ENCODE measurements at regions of chr14 and their contacts with region 1.

Region 1: GRCh38 chr14:75293920-75294642 is 15.5 kb downstream of the FOS start:
- DNase-seq: peak; percentile 98 to 100
- H3K4me3 ChIP-seq: peak overlapping the region; percentile 65
- H3K27ac ChIP-seq: peak overlapping the region; percentile 79
- H3K4me1 ChIP-seq: peaks cover 40% of the 10 kb centered on the region
- H3K27me3 ChIP-seq: no peaks in the 10 kb centered on the region
- CTCF ChIP-seq: no peak

Region 2: DNA sequence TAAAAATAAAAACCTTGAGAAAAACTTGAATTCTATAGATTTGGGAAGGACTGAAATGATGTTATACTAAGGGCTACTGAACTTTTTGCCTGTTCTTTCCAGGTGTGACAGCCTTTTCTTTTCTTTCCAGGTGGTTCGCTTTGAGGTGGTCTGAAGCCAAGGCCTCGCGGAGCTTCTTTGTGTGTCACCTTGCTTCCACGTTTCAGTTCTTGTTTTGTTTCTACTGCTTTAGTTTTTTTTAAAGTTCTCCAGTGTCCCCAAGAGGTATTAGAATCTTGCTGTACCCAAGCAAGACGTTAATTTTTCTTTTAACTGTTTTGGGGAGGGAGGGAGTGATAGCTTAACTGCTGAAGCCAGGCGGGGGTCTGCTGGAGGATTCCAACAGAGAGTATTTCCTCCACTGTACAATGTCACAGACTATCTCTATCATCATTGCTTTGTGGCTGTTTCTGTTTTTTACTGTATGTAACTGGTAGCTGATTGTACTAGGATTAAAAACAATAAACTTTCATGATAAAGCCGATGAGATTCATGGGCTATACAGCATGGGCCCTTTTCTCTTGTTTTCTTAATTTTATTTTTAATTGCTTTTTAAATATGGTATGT is 458.3 kb before region 1 on chr14:
- CTCF ChIA-PET with region 1: no interaction called
- POLR2A ChIA-PET with region 1: interaction called, 13 read pairs
- intact Hi-C with region 1: no loop called
- DNase-seq: no peak
- H3K4me3 ChIP-seq: no peak overlapping the region
- H3K27ac ChIP-seq: no peak overlapping the region
- H3K4me1 ChIP-seq: no peaks in the 10 kb centered on the region
- H3K27me3 ChIP-seq: no peaks in the 10 kb centered on the region
- CTCF ChIP-seq: no peak

Region 3: GRCh38 chr14:75132382-75133086 is 161.5 kb before region 1 on chr14:
- CTCF ChIA-PET with region 1: interaction called, 10 read pairs
- POLR2A ChIA-PET with region 1: interaction called, 5 read pairs
- intact Hi-C with region 1: loop called (anchors 1 kb)
- DNase-seq: peak; percentile 79 to 87
- H3K4me3 ChIP-seq: no peak overlapping the region
- H3K27ac ChIP-seq: peak overlapping the region; percentile 33
- H3K4me1 ChIP-seq: peaks cover 29% of the 10 kb centered on the region
- H3K27me3 ChIP-seq: no peaks in the 10 kb centered on the region
- CTCF ChIP-seq: peak; percentile 96

Region 4: DNA sequence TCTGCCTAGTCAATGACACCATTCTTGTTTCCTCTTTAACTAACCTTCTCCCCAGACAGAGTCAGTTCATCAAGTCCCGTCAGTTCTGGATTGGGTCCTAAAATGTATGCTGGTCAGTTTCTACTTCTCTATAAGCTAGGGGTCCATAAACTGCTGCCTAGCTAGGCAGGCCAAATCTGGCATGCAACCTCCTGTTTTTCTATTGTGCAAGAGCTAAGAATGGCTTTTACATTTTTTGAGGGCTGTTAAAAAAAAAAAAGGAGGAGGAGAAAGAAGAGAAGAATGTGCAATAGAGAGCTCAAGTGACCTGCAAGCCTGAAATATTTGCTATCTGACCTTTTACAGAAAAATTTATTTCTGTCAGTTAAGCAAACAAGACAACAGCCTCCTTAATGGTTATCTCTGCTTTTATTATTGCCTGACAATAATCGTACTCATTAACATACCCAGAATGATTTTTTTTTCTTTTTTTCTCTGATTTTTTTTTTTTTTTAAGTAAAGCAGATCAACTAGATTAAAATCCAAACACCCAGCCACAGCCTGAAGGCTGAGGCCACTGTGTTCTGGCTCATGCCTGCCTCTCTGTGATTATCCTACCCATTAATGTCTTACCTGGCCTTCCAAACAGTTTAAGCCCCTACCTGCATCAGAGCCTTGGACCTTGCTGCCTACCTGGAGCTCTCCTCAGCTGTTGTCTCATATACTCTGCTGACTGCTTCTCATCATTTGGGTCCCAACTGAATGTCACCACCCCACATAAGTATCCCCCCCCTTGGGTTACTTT is 111.0 kb before region 1 on chr14:
- CTCF ChIA-PET with region 1: interaction called, 3 read pairs
- POLR2A ChIA-PET with region 1: interaction called, 11 read pairs
- intact Hi-C with region 1: no loop called
- DNase-seq: peak; percentile 53 to 94
- H3K4me3 ChIP-seq: no peak overlapping the region
- H3K27ac ChIP-seq: peak overlapping the region; percentile 63
- H3K4me1 ChIP-seq: peaks cover 39% of the 10 kb centered on the region
- H3K27me3 ChIP-seq: no peaks in the 10 kb centered on the region
- CTCF ChIP-seq: no peak; the same call in 1 of the 2 replicates

Region 5: DNA sequence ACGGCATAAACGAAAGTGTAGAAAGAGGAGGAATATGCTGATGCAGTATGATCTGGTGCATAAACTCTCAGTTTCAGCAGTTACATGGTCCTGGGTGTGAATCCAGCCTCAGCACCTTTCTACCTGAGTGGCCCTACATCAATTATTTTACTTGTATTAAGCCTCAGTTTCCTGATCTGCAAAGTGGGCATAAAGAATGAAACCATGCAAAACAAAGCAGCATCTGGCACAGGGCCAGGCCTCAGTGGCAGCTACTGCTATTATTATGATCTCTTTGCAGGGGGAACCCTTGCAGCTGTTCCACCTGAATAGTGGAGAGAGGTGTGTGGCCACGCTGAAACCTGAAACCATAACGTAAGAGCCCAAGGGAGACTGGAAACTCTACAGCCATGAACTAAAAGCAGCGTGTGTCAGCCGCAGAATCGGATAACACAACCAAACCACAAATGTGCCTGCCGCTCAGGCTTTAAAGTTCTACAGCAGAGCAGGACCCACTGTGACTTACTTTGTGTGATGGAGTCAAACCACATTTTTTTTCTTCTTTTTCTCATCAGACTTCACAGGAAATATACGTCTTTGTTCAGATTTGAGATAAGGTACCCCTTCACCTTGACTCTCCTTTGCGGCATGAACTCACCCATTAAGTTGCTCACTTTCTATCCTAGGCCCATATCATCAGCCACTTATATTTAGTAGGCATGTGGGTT is 44.7 kb before region 1 on chr14:
- CTCF ChIA-PET with region 1: interaction called, 5 read pairs
- POLR2A ChIA-PET with region 1: interaction called, 19 read pairs
- intact Hi-C with region 1: no loop called
- DNase-seq: peak; percentile 48 to 72
- H3K4me3 ChIP-seq: no peak overlapping the region; the same call in 1 of the 2 replicates
- H3K27ac ChIP-seq: peak overlapping the region; percentile 51
- H3K4me1 ChIP-seq: peaks cover 60% of the 10 kb centered on the region
- H3K27me3 ChIP-seq: no peaks in the 10 kb centered on the region
- CTCF ChIP-seq: no peak

Region 6: GRCh38 chr14:75278422-75279161 is 15.5 kb before region 1 on chr14 and contains the start of gene FOS:
- CTCF ChIA-PET with region 1: interaction called, 10 read pairs
- POLR2A ChIA-PET with region 1: interaction called, 65 read pairs
- intact Hi-C with region 1: loop called (anchors 1 kb)
- DNase-seq: peak; percentile 92 to 98
- H3K4me3 ChIP-seq: peak within 1 kb of the TSS; percentile 90
- H3K27ac ChIP-seq: peak within 1 kb of the TSS; percentile 95
- H3K4me1 ChIP-seq: peaks cover 51% of the 10 kb centered on the region
- H3K27me3 ChIP-seq: no peaks in the 10 kb centered on the region
- CTCF ChIP-seq: no peak
- total RNA-seq, gene FOS: 84.6 and 154 TPM in 2 replicates

Measured in PC-9 (cell line).